ENCODE measurements at regions of chr6 and their contacts with region 1.

Region 1: DNA sequence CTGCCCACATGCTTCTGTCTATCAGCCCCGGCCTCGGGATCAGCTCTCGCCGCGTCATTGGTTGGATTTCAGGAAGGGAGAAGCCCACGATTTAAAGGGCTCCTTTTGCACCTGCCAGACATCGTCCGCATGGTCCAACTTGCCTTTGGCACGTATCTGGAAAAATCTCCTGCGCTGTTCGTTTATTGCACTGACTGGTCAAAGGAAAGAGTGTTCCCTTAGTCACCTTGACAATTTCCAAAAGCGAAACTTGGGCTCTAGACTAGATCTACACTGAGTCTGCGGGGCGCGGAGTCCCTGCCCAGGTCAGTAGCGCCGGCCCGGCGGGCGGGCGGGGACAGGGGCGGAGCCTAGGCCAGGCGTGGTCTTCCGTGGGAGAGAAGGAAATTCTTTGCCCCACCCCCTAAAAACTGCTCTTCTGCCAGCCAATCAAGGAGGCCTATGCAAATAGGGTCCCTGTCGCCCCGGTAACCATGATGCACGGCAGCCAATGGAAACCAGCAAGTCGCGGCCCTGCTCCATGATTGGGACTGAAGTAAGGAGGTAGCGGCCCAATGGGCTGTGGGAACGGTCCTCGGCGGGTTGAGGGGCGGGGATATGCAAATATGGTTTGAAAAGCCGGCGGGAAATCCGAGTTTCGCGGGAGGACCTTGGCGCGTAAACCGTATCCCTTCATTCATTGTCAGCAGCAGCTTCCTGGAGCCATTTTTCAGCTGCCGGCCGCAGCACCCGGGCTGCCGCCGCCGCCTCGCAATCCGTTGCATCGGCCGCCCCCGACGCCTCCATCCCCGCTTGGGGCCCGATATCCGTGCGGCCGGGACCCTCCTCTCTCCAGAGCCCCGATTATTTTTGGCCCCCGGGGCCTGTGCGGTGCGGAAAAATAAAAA is at the start of gene E2F3:
- DNase-seq: peak; percentile 100
- H3K4me3 Mint-ChIP-seq: peak within 1 kb of the TSS; percentile 90
- H3K27ac Mint-ChIP-seq: peak within 1 kb of the TSS; percentile 99
- H3K4me1 Mint-ChIP-seq: peaks cover 10% of the 10 kb centered on the region
- H3K27me3 Mint-ChIP-seq: no peaks in the 10 kb centered on the region
- CTCF ChIP-seq: no peak
- total RNA-seq, gene E2F3: 69.1 and 69.8 TPM in 2 replicates

Region 2: GRCh38 chr6:20117474-20117873 is 284.0 kb before region 1 on chr6:
- CTCF ChIA-PET with region 1: no interaction called
- intact Hi-C with region 1: loop called (anchors 1 kb)
- DNase-seq: peak; percentile 85
- H3K4me3 Mint-ChIP-seq: peak overlapping the region; percentile 5
- H3K27ac Mint-ChIP-seq: peak overlapping the region; percentile 43
- H3K4me1 Mint-ChIP-seq: peaks cover 28% of the 10 kb centered on the region
- H3K27me3 Mint-ChIP-seq: no peaks in the 10 kb centered on the region
- CTCF ChIP-seq: no peak

Region 3: DNA sequence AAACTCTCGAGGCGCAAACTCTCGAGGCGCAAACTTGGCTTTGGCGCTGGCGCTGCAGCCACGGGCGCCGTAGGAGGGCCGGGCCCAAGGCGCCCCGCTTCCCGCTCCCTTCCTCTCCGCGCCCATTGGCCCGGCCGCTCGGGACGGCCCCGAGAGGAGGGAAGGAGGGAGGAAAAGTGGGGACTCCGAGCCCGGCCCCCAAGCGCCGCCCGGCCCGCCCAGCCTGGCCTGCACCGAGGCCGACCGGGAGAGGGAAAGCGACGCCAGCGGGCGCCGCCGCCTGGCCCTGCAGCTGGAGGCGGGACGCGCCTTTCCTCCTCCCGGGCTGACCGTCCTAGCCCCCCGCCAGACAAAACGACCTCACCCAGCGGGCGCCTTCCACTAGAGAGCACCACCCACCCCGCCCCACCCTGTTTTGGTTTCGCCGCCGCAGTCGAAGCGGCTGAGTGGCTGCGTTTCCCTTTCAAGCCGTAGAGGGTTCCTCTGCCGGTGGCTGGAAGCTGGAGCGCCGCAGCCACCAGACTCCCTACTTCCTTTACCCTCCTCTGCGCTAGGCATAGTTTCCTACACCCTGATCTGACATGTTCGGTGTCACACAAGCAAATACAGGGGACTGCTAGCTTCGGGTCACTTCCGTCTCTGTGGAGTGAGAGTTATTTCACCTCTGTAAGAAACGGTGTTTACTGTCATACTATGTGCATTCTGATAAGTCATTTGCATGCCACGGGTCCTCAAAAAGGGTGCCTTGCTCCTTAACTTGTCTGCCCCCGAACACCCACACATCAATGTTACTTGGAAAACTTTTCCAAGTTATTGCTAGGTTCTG is 188.8 kb before region 1 on chr6 and contains the start of gene MBOAT1:
- CTCF ChIA-PET with region 1: no interaction called
- intact Hi-C with region 1: loop called (anchors 5 kb)
- DNase-seq: peak; percentile 99
- H3K4me3 Mint-ChIP-seq: peak within 1 kb of the TSS; percentile 86
- H3K27ac Mint-ChIP-seq: peak within 1 kb of the TSS; percentile 99
- H3K4me1 Mint-ChIP-seq: peaks cover 45% of the 10 kb centered on the region
- H3K27me3 Mint-ChIP-seq: no peaks in the 10 kb centered on the region
- CTCF ChIP-seq: peak; percentile 42
- total RNA-seq, gene MBOAT1: 39.9 and 47.8 TPM in 2 replicates

Region 4: DNA sequence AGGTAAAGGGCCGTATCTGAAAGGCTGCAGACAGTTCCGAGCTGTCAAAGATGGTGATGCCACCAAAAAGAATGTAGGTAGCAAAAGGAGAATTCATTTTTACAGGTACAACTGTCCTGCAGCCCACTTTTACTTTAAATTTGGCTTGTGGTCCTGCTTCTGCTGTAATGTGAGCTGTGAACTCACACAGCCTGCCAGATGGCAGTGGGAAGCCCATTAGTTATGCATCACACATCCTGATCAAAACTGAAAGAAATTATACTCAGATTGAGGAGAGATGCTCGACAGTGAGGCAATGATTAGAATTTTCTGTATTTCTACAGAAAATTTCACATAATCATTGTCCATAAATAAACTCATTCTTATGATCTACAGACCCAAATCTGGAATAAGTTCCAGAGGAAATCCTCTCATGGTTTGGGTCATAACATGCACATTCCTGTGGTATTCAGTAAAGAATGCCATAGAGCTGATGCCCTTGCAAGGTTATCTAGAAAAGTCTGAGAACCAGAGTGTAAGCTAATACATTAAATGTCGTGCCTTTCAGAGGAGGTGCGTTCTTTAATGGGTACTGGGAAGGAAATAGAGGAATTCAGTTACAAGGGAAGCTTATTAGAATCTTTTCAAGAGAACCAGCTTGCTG is 23.7 kb before region 1 on chr6:
- CTCF ChIA-PET with region 1: interaction called, 13 read pairs
- intact Hi-C with region 1: no loop called
- DNase-seq: no peak
- H3K4me3 Mint-ChIP-seq: no peak overlapping the region
- H3K27ac Mint-ChIP-seq: peak overlapping the region; percentile 4
- H3K4me1 Mint-ChIP-seq: peaks cover 35% of the 10 kb centered on the region
- H3K27me3 Mint-ChIP-seq: no peaks in the 10 kb centered on the region
- CTCF ChIP-seq: no peak

Region 5: DNA sequence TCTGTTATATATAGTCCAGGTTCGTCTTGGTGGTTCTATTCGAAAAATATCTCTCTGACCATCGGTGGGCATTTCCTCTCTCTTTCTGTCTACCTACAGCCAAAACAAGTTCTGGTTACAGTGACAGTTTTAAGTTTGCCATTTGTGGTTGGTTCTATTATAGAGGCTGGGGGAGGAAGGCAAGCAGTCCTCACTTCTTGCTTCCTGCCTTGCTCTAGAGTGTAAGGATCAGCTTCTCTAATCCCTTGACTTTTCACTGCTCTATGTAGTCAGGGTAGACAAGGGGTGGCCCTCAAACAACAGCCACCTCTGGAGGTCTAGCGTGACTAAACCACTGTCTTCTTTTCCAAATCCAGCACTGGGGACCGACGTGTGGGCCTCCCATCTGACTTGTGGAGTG is 16.4 kb after region 1 on chr6:
- CTCF ChIA-PET with region 1: interaction called, 21 read pairs
- intact Hi-C with region 1: no loop called
- DNase-seq: no peak
- H3K4me3 Mint-ChIP-seq: no peak overlapping the region
- H3K27ac Mint-ChIP-seq: no peak overlapping the region
- H3K4me1 Mint-ChIP-seq: peaks cover 40% of the 10 kb centered on the region
- H3K27me3 Mint-ChIP-seq: no peaks in the 10 kb centered on the region
- CTCF ChIP-seq: no peak

Region 6: DNA sequence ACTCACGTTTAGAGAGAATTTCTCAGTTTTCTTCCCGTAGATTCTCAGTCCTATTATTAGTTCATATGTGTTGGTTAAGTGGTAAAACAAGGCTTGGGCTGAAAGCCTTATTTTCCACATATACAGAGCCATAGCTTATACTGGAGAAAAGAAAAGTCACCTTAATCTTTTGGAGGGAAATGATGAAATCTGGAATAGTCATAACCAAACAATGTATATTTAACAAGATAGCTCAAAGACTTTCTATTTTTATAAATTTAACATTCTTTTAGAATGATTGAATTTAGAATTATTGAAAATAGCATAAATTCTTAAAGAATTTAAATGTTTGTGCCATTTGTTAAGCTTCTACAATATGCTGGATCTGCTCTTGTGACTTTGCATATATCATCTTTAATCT is 218.6 kb after region 1 on chr6:
- CTCF ChIA-PET with region 1: no interaction called
- intact Hi-C with region 1: no loop called
- DNase-seq: no peak
- H3K4me3 Mint-ChIP-seq: no peak overlapping the region
- H3K27ac Mint-ChIP-seq: no peak overlapping the region
- H3K4me1 Mint-ChIP-seq: peaks cover 16% of the 10 kb centered on the region
- H3K27me3 Mint-ChIP-seq: no peaks in the 10 kb centered on the region
- CTCF ChIP-seq: no peak

Measured in Calu3 (cell line).